Prostate gland (tissue), 2 donors: ENCODE measurements at regions of chr9 and their contacts with region 1.

Region 1: DNA sequence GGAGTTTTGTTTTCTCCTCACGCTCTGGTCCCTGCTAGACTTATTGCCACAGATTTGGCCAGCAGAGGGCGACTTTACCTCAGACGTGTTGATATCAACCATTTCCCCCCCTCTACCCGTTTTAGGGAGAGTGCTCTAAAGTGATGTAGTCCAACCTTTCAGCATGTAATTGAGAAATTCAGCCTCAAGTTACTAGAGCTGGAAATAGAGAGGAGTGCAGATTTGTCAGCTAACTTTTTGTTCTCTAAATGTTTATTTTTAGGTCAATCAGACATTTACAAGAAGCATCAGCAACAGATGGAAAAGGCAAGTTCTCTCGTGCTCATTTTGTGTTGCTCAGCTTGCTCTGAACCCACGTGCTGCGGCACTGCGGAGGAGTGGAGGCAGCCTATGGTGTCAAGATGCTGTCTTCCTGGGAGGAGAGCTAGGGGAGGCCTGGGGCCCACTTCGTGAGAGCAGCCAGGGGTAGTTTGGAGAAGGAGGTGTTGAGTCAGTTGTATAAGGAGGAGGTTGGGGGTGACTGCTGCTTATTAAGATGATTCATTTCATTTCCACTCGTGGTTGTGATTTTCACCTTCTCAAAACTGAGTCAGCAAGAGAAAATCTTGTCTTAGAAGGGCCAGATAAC is 53.6 kb downstream of the GPR107 start:
- DNase-seq: peak; percentile 82
- H3K4me3 ChIP-seq: no peak overlapping the region
- H3K27ac ChIP-seq: peak overlapping the region; percentile 41 to 51
- H3K4me1 ChIP-seq: no peaks in the 10 kb centered on the region
- H3K27me3 ChIP-seq: no peaks in the 10 kb centered on the region
- CTCF ChIP-seq: peak; percentile 65 to 84 (median 80)
- POLR2A ChIP-seq: no peak

Region 2: DNA sequence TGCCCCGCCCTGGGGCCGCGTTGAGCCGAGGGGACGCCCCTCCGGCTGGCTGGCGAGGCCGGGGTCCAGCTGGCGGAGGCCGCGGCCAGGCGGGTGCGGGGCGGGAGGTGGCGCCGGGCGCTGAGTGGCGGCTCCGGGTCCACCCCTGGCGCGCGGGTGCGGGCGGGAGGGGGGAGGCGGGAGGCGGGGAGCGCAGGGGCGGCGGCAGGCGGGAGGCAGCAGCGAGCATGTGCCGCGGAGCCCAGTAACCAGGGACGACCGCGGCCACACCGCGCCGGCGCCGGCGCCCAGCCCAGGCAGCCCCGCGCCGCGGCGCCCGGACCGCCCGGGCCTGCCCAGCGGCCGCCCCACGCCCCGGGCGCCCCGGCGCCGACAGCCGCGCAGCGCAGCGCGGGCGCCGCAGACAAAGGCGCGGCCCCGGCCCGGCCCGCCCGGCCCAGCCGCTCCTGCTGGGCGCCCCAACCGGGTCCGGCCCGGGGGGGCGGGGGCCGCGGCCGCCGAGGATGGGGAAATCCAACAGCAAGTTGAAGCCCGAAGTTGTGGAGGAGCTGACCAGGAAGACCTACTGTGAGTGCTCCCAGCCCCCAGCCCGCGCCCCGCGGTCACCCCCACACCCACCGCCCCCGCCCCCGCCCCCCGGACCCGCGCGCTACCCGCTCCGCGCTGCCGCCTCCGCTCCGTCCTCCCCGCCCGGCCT is 65.0 kb after region 1 on chr9 and contains the start of gene NCS1:
- intact Hi-C with region 1: loop called (anchors 5 kb)
- DNase-seq: peak; percentile 77
- H3K4me3 ChIP-seq: peak within 1 kb of the TSS; percentile 57 to 63
- H3K27ac ChIP-seq: peak within 1 kb of the TSS; percentile 79
- H3K4me1 ChIP-seq: no peaks in the 10 kb centered on the region
- H3K27me3 ChIP-seq: no peaks in the 10 kb centered on the region
- CTCF ChIP-seq: no peak
- POLR2A ChIP-seq: no peak
- total RNA-seq, gene NCS1: 19.1 to 28.5 TPM

Region 3: DNA sequence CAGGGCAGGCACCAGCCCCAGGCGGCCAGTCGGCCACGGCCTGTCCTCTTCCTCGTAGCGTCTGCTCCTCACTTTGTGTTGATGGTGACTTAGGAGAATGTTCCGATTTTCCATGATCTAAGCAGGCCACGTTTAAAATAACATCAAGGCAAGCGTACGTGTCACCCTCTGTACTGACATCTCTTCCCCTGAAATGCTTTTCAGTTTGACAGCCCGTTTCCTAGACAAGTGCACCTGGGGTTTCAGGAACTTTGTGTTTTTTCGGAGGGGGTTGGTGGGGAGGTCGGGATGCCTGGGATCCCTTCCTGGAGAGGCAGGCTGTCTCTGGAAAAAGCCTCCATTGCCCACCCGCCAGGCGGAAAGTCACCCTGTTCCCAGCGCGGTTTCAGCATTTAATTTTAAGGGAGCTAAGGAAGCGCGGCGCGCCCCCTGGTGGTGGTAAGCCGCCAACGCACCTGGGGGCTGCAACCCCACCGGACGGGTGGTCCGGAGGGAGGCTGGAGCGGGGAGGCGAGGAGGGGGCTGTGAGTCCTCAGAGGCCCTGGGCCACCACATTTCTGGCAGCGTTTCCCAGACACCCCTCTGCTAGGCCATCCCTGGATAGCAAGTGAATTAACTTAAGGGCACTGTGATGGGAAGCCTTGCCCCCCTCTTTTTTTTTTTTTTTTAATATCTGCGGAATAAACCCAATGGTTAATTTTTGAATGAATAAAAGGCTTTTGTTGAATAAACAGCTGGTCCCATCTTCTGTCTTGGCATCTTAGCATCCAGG is 128.7 kb after region 1 on chr9:
- intact Hi-C with region 1: loop called (anchors 1 kb)
- DNase-seq: peak; percentile 46
- H3K4me3 ChIP-seq: no peak overlapping the region
- H3K27ac ChIP-seq: peak overlapping the region; percentile 50 to 58
- H3K4me1 ChIP-seq: no peaks in the 10 kb centered on the region
- H3K27me3 ChIP-seq: no peaks in the 10 kb centered on the region
- CTCF ChIP-seq: peak; percentile 96 to 100 (median 98)
- POLR2A ChIP-seq: no peak

Region 4: GRCh38 chr9:130343445-130343918 is 236.1 kb after region 1 on chr9:
- intact Hi-C with region 1: loop called (anchors 2 kb)
- DNase-seq: no peak
- H3K4me3 ChIP-seq: no peak overlapping the region
- H3K27ac ChIP-seq: no peak overlapping the region
- H3K4me1 ChIP-seq: no peaks in the 10 kb centered on the region
- H3K27me3 ChIP-seq: no peaks in the 10 kb centered on the region
- CTCF ChIP-seq: peak; percentile 34 to 73 (median 66)
- POLR2A ChIP-seq: no peak

Region 5: GRCh38 chr9:130682490-130683121 is 575.3 kb after region 1 on chr9:
- intact Hi-C with region 1: loop called (anchors 5 kb)
- DNase-seq: peak; percentile 74
- H3K4me3 ChIP-seq: no peak overlapping the region
- H3K27ac ChIP-seq: no peak overlapping the region
- H3K4me1 ChIP-seq: peaks cover 5% of the 10 kb centered on the region
- H3K27me3 ChIP-seq: no peaks in the 10 kb centered on the region
- CTCF ChIP-seq: peak; percentile 71 to 90 (median 84)
- POLR2A ChIP-seq: no peak